PC-9 (cell line): ENCODE measurements at regions of chr19 and their contacts with region 1.

Region 1: GRCh38 chr19:33778089-33778791 is 18.4 kb upstream of the KCTD15 start:
- DNase-seq: peak in 1 of 2 experiments; percentile 80
- H3K4me3 ChIP-seq: no peak overlapping the region
- H3K27ac ChIP-seq: no peak overlapping the region
- H3K4me1 ChIP-seq: no peaks in the 10 kb centered on the region
- H3K27me3 ChIP-seq: peaks cover 54% of the 10 kb centered on the region
- CTCF ChIP-seq: peak; percentile 97

Region 2: DNA sequence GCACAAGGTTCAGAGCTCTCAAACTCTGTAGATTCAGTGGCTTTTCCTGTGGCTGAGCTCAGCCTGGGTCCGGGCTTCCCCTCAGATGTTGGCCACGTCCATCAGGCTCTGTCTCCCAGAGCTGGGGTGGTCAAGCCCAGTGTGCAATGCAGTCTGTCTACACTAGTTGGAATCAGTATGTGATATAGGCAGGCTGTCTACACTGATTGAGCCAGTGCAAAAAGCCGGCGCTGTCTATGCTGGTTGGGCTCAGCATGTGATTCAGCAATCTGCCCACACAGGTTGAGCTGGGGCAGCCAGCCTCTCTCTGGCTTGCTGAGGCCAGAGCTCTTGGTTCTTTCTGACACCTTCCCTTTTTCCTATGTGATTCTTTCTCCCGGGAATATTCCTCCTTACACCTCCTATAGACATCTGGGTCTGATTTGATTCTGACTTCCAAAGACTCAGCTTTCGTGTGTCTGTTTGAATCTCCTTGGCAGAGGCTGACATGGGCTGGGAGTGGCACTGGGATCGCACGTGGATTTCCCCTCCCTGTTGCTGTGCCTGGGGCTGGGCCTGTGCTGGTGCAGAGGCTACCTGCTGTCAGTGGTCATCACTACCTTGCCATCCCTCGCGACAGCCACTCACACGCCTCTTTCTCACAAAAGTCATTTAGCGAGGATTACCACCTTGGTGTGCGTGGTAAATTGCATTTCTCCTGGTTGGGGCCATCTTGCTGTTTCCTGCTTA is 147.2 kb before region 1 on chr19:
- CTCF ChIA-PET with region 1: no interaction called
- POLR2A ChIA-PET with region 1: no interaction called
- intact Hi-C with region 1: no loop called
- DNase-seq: no peak
- H3K4me3 ChIP-seq: no peak overlapping the region
- H3K27ac ChIP-seq: no peak overlapping the region
- H3K4me1 ChIP-seq: no peaks in the 10 kb centered on the region
- H3K27me3 ChIP-seq: peaks cover 93% of the 10 kb centered on the region
- CTCF ChIP-seq: no peak

Region 3: DNA sequence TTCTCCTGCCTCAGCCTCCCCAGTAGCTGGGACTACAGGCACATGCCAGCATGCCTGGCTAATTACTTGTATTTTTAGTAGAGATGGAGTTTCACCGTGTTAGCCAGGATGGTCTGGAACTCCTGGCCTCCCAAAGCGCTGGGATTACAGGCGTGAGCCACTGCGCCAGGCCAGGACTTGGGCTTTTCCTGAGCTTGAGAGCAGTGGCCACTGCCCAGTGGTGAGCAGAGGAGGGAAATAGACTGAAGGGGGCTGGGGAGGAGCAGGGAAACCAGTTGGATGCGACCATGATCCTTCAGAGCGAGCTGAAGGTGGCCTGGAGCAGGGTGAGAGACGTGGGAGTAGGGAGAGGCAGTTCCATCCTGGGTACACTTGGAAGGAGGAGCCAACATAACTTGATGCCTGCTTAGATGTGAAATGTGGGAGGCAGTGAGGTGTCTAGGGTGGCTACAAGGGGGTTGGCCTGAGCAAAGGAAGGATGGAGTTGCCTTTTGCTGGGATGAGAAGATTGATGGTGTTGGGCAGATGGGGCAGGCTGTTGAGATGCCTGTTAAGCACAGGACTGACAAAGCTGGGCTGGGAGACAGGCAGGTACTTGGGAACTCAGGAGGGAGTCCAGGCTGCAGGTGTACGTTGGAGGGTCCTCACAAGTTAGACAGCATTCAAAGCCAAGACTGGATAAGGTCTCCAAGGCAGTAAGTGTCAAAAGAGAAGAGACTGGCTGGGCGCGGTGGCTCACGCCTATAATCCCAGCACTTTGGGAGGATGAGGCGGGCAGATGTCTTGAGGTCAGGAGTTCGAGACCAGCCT is 50.2 kb after region 1 on chr19:
- CTCF ChIA-PET with region 1: no interaction called
- POLR2A ChIA-PET with region 1: no interaction called
- intact Hi-C with region 1: no loop called
- DNase-seq: no peak
- H3K4me3 ChIP-seq: no peak overlapping the region
- H3K27ac ChIP-seq: no peak overlapping the region
- H3K4me1 ChIP-seq: no peaks in the 10 kb centered on the region; the same call in 1 of the 2 replicates
- H3K27me3 ChIP-seq: peaks cover 2% of the 10 kb centered on the region; the same call in 1 of the 2 replicates
- CTCF ChIP-seq: no peak

Region 4: DNA sequence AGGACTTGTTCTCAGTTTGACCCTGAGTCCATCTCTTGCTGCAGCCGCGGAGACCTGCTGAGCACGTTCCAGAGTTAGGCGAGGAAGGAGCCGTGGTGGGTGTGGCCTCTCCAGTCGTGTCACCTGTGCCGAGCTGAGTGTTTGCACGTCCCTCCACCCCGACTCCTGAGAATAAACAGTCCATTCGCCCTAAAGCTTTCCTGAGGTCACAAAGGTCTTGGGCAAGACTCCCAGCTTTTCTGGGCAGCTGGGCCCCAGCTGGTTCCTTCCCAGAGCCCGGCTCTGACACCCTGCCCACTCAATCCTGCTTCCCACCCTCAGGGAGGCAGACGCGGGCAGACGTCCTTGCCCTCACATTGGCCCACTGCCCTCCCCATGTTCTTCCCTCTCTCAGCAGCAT is 160.6 kb after region 1 on chr19:
- CTCF ChIA-PET with region 1: no interaction called
- POLR2A ChIA-PET with region 1: no interaction called
- intact Hi-C with region 1: no loop called
- DNase-seq: no peak
- H3K4me3 ChIP-seq: no peak overlapping the region
- H3K27ac ChIP-seq: no peak overlapping the region
- H3K4me1 ChIP-seq: no peaks in the 10 kb centered on the region
- H3K27me3 ChIP-seq: peaks cover 90% of the 10 kb centered on the region
- CTCF ChIP-seq: no peak

Region 5: DNA sequence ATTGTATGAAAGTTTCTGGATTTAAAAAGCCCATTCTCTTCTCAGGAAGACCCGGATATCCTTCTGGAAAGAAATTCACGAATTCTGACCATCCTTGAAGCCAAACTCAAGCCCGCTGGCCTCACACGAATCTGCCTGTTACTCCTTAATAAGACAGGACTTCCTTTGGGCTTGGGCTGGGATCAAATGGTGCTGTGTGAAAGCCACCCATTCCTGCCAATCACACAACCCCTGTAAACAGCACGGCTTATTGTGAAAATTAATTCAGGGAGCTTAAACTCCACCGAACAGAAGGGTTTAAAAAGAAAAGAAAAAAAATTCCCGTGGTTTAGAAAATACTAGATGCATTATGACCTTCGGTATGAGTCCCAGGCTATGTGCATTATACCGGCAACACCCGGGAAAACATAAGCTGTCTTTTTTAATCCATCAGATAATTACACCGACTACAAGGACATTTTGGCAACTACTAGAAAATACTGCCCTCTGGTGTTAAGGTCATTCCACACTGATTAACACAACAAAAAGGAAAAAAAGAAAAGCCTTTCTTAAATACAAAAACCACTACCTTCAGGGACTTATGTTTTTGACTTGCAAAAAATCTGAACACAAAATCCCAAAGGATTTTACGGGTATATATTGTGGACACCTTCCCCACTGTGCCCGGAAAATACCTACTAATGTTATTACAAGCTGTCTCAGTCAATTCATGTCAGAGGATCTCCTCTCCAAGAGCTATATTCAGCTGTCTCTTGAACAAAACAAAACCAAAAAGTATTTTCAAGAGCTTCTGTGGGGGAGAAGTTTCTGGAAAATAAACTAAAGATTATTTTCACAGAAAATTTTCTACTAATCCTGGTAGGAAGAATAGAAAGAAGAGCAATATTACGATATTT is 318.0 kb after region 1 on chr19:
- CTCF ChIA-PET with region 1: interaction called, 14 read pairs
- POLR2A ChIA-PET with region 1: no interaction called
- intact Hi-C with region 1: loop called (anchors 1 kb)
- DNase-seq: peak in 1 of 2 experiments; percentile 47
- H3K4me3 ChIP-seq: no peak overlapping the region
- H3K27ac ChIP-seq: no peak overlapping the region
- H3K4me1 ChIP-seq: no peaks in the 10 kb centered on the region
- H3K27me3 ChIP-seq: peaks cover 79% of the 10 kb centered on the region
- CTCF ChIP-seq: peak; percentile 72

Region 6: GRCh38 chr19:34145741-34146202 is 367.5 kb after region 1 on chr19:
- CTCF ChIA-PET with region 1: interaction called, 3 read pairs
- POLR2A ChIA-PET with region 1: no interaction called
- intact Hi-C with region 1: loop called (anchors 1 kb)
- DNase-seq: peak; percentile 44 to 49
- H3K4me3 ChIP-seq: no peak overlapping the region
- H3K27ac ChIP-seq: no peak overlapping the region
- H3K4me1 ChIP-seq: no peaks in the 10 kb centered on the region
- H3K27me3 ChIP-seq: no peaks in the 10 kb centered on the region
- CTCF ChIP-seq: peak; percentile 84

Region 7: DNA sequence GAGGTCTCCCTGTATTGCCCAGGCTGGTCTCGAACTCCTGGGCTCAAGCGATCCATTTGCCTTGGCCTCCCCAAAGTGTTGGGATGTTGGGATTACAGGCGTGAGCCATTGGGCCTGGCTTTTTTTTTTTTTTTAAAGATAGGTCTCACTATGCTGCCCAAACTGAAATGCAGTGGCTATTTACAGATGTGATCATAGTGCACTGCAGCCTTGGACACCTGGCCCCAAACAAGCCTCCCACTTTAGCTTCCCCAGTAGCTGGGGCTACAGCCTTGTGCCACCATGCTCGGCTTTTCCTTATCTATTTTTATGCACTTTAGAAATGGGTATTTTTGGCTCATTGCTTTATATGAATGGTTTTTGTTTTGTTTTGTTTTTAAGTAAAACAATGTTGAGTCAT is 431.5 kb after region 1 on chr19:
- CTCF ChIA-PET with region 1: no interaction called
- POLR2A ChIA-PET with region 1: no interaction called
- intact Hi-C with region 1: no loop called
- DNase-seq: no peak
- H3K4me3 ChIP-seq: no peak overlapping the region
- H3K27ac ChIP-seq: no peak overlapping the region
- H3K4me1 ChIP-seq: no peaks in the 10 kb centered on the region
- H3K27me3 ChIP-seq: no peaks in the 10 kb centered on the region
- CTCF ChIP-seq: no peak

Region 8: GRCh38 chr19:34501339-34502320 is 723.4 kb after region 1 on chr19:
- CTCF ChIA-PET with region 1: no interaction called
- POLR2A ChIA-PET with region 1: no interaction called
- intact Hi-C with region 1: loop called (anchors 1 kb)
- DNase-seq: peak; percentile 74 to 90
- H3K4me3 ChIP-seq: no peak overlapping the region
- H3K27ac ChIP-seq: no peak overlapping the region
- H3K4me1 ChIP-seq: no peaks in the 10 kb centered on the region
- H3K27me3 ChIP-seq: no peaks in the 10 kb centered on the region
- CTCF ChIP-seq: peak; percentile 96